Activated CD8-positive, alpha-beta T cell treated with anti-CD3 and anti-CD28 coated beads for 36 hours (primary cell): ENCODE measurements at regions of chr1 and their contacts with region 1.

Region 1: GRCh38 chr1:25997828-25998761 is at the start of gene PAFAH2:
- DNase-seq: peak; percentile 98
- ATAC-seq: peak; percentile 97
- H3K4me3 Mint-ChIP-seq: peak within 1 kb of the TSS; percentile 94
- H3K27ac Mint-ChIP-seq: peak within 1 kb of the TSS; percentile 98
- H3K4me1 Mint-ChIP-seq: peaks cover 18% of the 10 kb centered on the region
- H3K27me3 Mint-ChIP-seq: no peaks in the 10 kb centered on the region
- CTCF ChIP-seq: peak; percentile 91
- total RNA-seq, gene PAFAH2: 7.4 to 8.0 TPM

Region 2: GRCh38 chr1:25451908-25452307 is 546.2 kb before region 1 on chr1:
- CTCF ChIA-PET with region 1: no interaction called
- POLR2A ChIA-PET with region 1: no interaction called
- intact Hi-C with region 1: no loop called
- DNase-seq: no peak
- ATAC-seq: no peak
- H3K4me3 Mint-ChIP-seq: no peak overlapping the region
- H3K27ac Mint-ChIP-seq: no peak overlapping the region
- H3K4me1 Mint-ChIP-seq: peaks cover 8% of the 10 kb centered on the region
- H3K27me3 Mint-ChIP-seq: no peaks in the 10 kb centered on the region
- CTCF ChIP-seq: no peak

Region 3: GRCh38 chr1:25874934-25875855 is 122.9 kb before region 1 on chr1 and contains the start of gene PAQR7:
- CTCF ChIA-PET with region 1: interaction called, 14 read pairs
- POLR2A ChIA-PET with region 1: interaction called, 3 read pairs
- intact Hi-C with region 1: no loop called
- DNase-seq: peak; percentile 77
- ATAC-seq: peak; percentile 88
- H3K4me3 Mint-ChIP-seq: peak within 1 kb of the TSS; percentile 88
- H3K27ac Mint-ChIP-seq: peak within 1 kb of the TSS; percentile 81
- H3K4me1 Mint-ChIP-seq: peaks cover 5% of the 10 kb centered on the region
- H3K27me3 Mint-ChIP-seq: peaks cover 4% of the 10 kb centered on the region
- CTCF ChIP-seq: no peak
- total RNA-seq, gene PAQR7: 6.8 to 8.0 TPM

Region 4: DNA sequence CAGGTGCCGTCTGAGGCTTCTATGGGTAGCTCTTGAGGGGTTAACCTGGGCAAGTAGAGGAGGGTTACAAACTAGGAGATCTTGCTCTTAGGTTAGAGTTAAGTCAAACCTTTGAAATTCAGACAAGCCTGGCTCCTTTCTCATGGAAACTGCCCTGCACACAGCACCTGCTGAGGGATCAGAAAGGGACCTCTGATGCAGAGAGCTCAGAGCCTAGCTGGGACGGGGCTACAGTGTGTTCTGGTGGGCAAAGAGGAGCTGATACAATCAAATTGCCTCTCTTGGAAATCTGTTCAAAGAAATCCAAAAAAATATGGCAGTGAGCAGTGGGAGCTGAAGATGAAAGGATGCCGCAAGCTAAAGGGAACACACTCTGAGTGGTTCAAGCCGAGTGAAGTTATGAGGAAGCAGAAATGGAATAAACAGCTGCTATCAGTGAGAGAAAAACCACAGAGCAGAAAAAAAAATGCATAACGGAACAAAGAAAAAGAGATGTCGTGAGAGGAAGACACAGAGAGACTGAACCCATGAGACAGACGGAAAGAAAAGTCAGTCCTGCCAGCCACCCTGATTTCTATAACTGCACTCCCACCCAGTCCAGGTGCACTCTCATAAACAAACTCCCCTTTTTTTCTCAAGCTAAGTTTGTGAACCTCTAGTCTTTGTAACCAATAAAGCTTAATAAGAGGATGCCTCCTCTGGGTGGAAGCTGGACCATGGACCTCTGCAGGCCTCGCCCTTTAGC is 26.9 kb before region 1 on chr1:
- CTCF ChIA-PET with region 1: interaction called, 14 read pairs
- POLR2A ChIA-PET with region 1: no interaction called
- intact Hi-C with region 1: no loop called
- DNase-seq: peak; percentile 37
- ATAC-seq: peak; percentile 90
- H3K4me3 Mint-ChIP-seq: peak overlapping the region; percentile 23
- H3K27ac Mint-ChIP-seq: peak overlapping the region; percentile 83
- H3K4me1 Mint-ChIP-seq: peaks cover 40% of the 10 kb centered on the region
- H3K27me3 Mint-ChIP-seq: no peaks in the 10 kb centered on the region
- CTCF ChIP-seq: no peak

Region 5: DNA sequence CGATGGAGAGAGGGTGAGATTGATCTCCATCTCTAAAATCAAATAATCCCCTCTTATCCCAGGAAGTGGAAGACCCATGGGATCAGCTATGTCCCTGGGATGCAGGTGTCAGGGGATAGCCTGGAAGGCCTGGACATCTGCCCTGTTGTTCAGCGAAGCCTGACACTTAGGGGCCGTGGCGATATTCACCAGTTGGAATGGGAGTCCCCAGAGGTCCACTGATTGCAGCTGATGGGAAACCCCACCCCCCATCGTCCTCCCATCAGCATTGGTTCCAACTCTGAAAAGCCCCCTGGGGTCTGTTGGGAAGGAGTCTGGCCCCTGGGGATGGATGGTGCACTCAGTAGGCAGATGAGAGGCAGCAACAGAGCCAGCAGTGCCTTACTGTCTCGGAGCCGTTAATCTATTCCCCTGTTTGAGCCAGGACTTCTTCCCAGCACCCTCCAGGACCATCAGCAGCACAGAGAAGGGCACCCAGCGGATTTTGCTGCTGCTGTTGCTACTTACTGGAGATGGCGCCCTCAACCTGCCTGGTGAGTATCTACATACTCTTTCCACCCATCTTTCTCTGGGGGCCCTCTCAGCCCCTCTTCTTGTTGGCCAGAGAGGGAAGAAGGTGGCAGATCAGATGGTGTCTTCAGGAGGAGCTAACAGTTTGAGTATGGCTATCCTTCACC is 205.7 kb after region 1 on chr1:
- CTCF ChIA-PET with region 1: no interaction called
- POLR2A ChIA-PET with region 1: no interaction called
- intact Hi-C with region 1: no loop called
- DNase-seq: peak; percentile 25
- ATAC-seq: no peak
- H3K4me3 Mint-ChIP-seq: no peak overlapping the region
- H3K27ac Mint-ChIP-seq: no peak overlapping the region
- H3K4me1 Mint-ChIP-seq: peaks cover 14% of the 10 kb centered on the region
- H3K27me3 Mint-ChIP-seq: no peaks in the 10 kb centered on the region
- CTCF ChIP-seq: no peak